Naive thymus-derived CD4-positive, alpha-beta T cell (primary cell): ENCODE measurements at regions of chr2 and their contacts with region 1.

Region 1: DNA sequence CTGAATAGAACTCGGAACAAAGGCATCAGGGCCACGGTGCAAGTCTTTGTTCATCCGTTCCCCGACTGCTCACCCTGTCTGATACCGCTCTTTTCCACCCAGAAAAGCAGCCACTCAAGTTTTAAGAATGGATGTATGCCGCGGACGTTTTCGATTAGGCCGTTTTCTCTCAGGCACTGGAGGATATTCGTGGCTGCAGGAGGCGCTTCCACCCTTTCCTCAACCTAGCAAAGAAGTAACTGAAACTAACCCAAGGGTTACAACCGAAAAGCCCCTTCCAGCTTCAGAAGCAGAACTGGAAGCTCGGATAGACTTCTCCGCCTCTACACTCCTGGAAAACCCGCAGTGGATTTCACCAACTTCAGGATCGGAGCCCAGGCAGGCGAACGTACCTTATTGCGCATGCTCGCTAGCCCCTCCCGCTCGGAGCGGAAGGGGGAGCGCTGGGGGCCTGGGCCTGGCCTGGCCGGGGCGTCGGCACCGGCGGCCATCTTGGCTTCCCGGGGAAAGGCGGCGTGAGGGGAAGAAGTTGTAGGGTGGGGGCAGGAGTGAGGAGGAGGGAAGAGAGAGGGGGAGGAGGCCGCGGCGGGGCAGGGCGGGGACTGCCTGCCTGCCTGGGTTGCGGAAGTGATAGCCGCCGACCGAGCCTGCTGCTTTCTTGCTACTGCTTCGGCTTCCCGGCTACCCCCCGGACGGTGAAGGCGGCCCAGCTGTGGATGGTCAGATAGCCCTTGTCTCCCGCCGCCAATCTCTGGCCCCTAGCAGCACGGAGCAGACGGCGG is at the start of gene ACTR3:
- DNase-seq: peak; percentile 93 to 99 (median 98)
- ATAC-seq: peak; percentile 94
- H3K4me3 ChIP-seq: peak within 1 kb of the TSS; percentile 89
- H3K4me3 Mint-ChIP-seq: peak within 1 kb of the TSS; percentile 88 to 100 (median 98)
- H3K27ac ChIP-seq: peak within 1 kb of the TSS; percentile 98
- H3K27ac Mint-ChIP-seq: peak within 1 kb of the TSS; percentile 90 to 99 (median 98)
- H3K4me1 ChIP-seq: peaks cover 45 to 68% of the 10 kb centered on the region in 2 donors
- H3K4me1 Mint-ChIP-seq: peaks cover 59 to 84% (median 81%) of the 10 kb centered on the region in 7 donors
- H3K27me3 ChIP-seq: no peaks in the 10 kb centered on the region
- H3K27me3 Mint-ChIP-seq: no peaks in the 10 kb centered on the region
- total RNA-seq, gene ACTR3: 172 to 612 (median 213) TPM

Region 2: GRCh38 chr2:112275306-112275886 is 1614.3 kb before region 1 on chr2 and contains the start of gene ZC3H6:
- CTCF ChIA-PET with region 1: no interaction called
- POLR2A ChIA-PET with region 1: interaction called, 3 read pairs
- intact Hi-C with region 1: loop called in 1 of 2 experiments (anchors 10 kb)
- DNase-seq: peak; percentile 96 to 100 (median 100)
- ATAC-seq: peak; percentile 98
- H3K4me3 ChIP-seq: peak within 1 kb of the TSS; percentile 99
- H3K4me3 Mint-ChIP-seq: peak within 1 kb of the TSS; percentile 85 to 95 (median 94)
- H3K27ac ChIP-seq: peak within 1 kb of the TSS; percentile 100
- H3K27ac Mint-ChIP-seq: peak within 1 kb of the TSS; percentile 90 to 99 (median 98)
- H3K4me1 ChIP-seq: peaks cover 14 to 18% of the 10 kb centered on the region in 2 donors
- H3K4me1 Mint-ChIP-seq: peaks cover 9 to 36% (median 25%) of the 10 kb centered on the region in 7 donors
- H3K27me3 ChIP-seq: no peaks in the 10 kb centered on the region
- H3K27me3 Mint-ChIP-seq: peaks cover 0 to 3% (median 0%) of the 10 kb centered on the region in 5 donors
- total RNA-seq, gene ZC3H6: 11.8 to 42.1 (median 23.7) TPM

Region 3: DNA sequence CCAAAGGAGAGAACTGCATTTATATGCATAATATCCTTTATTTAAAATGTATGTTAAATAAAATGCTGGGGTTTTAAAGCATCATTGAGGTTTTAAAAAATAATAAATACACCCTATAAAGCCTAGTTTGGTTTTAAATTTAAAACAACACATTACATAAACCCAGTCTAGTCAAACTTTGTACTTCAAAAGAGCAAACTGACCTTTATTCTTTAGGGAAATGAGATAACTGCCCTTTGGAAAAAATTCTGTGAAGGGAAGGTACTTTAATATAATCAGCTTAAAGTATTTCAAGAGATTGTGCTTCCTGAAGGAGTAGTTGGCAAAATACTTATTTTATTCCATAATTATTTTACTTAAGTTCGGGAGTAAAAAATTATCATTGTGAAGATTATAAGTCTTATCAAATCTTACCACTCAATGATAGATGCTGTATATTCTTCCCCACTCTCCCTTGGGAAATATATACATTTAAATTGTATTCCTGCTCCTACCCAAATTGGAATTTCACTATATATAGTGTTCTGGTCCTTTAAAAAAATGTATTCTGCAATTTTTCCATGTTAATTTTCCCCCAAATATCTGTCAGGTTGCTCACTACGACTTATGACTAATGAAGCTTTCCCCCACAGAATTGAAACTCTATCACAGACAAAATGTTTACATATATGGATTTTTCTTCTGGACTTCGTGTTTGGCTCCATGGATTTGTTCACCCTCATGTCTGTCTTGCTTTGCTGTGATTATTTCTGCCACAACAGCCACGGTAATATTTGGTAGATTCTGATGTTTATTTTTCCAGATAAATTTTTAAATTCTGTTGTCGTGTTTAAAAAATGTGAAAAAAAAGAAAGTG is 1572.1 kb before region 1 on chr2:
- CTCF ChIA-PET with region 1: no interaction called
- POLR2A ChIA-PET with region 1: no interaction called
- intact Hi-C with region 1: no loop called
- DNase-seq: no peak
- ATAC-seq: no peak
- H3K4me3 ChIP-seq: no peak overlapping the region
- H3K4me3 Mint-ChIP-seq: no peak overlapping the region
- H3K27ac ChIP-seq: no peak overlapping the region
- H3K27ac Mint-ChIP-seq: no peak overlapping the region
- H3K4me1 ChIP-seq: no peaks in the 10 kb centered on the region
- H3K4me1 Mint-ChIP-seq: no peaks in the 10 kb centered on the region
- H3K27me3 ChIP-seq: no peaks in the 10 kb centered on the region
- H3K27me3 Mint-ChIP-seq: no peaks in the 10 kb centered on the region

Region 4: DNA sequence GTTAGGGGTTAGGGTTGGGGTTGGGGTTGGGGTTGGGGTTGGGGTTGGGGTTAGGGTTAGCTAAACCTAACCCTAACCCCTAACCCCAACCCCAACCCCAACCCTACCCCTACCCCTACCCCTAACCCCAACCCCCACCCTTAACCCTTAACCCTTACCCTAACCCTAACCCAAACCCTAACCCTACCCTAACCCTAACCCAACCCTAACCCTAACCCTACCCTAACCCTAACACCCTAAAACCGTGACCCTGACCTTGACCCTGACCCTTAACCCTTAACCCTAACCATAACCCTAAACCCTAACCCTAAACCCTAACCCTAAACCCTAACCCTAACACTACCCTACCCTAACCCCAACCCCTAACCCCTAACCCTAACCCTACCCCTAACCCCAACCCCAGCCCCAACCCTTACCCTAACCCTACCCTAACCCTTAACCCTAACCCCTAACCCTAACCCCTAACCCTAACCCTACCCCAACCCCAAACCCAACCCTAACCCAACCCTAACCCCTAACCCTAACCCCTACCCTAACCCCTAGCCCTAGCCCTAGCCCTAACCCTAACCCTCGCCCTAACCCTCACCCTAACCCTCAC is 286.7 kb before region 1 on chr2:
- CTCF ChIA-PET with region 1: no interaction called
- POLR2A ChIA-PET with region 1: no interaction called
- intact Hi-C with region 1: loop called in 1 of 2 experiments (anchors 10 kb)
- DNase-seq: no peak
- ATAC-seq: no peak
- H3K4me3 ChIP-seq: peak overlapping the region; percentile 51
- H3K4me3 Mint-ChIP-seq: peak overlapping the region; percentile 78 to 94 (median 91)
- H3K27ac ChIP-seq: peak overlapping the region; percentile 79
- H3K27ac Mint-ChIP-seq: peak overlapping the region; percentile 88 to 98 (median 94)
- H3K4me1 ChIP-seq: no peaks in the 10 kb centered on the region
- H3K4me1 Mint-ChIP-seq: peaks cover 0 to 9% (median 5%) of the 10 kb centered on the region in 7 donors
- H3K27me3 ChIP-seq: no peaks in the 10 kb centered on the region
- H3K27me3 Mint-ChIP-seq: no peaks in the 10 kb centered on the region

Region 5: DNA sequence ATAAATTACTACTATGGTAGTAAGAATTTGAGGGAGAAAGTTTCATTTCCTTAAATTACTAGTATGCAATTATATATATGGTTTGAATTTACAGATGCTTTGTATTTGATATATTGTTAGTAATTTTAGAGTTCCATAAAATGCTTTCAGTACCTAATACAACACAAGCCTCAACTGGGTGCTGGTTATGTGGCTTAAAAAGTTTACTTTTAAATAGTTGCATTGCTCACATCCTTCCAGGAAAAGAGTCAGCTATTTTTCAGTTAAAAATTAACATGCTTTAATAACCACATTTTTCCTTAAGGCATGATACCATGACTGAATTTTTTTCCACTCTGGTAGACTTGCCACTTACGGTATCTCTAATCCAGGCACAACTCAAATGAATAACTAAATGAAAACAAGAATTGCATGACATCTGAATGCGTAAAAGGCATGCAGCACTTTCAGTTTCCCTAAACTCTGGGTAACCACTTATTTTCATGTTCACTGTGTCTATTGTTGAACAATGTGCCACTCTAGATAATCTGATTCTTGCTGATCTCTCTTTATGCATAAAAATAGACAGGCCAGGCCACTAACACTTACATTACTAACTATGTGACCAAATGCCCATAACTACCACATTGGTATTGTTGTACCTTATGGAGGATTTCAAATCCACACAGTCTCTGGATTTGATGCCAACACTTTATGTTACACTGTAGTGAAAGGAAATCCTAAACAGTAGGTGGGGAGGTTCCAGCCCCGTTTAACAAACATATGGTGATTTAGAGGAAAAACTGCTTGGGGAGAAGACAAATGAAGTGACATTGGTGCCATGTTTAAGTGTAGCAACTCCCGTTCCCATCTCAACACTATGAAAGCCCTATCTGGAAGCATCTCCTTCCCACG is 97.7 kb before region 1 on chr2:
- CTCF ChIA-PET with region 1: no interaction called
- POLR2A ChIA-PET with region 1: no interaction called
- intact Hi-C with region 1: loop called in 1 of 2 experiments (anchors 1 kb)
- DNase-seq: no peak
- ATAC-seq: no peak
- H3K4me3 ChIP-seq: no peak overlapping the region
- H3K4me3 Mint-ChIP-seq: peak overlapping the region in 1 of 10 donors; percentile 71
- H3K27ac ChIP-seq: no peak overlapping the region
- H3K27ac Mint-ChIP-seq: peak overlapping the region in 1 of 9 donors; percentile 73
- H3K4me1 ChIP-seq: no peaks in the 10 kb centered on the region
- H3K4me1 Mint-ChIP-seq: peaks cover 0 to 24% (median 0%) of the 10 kb centered on the region in 7 donors
- H3K27me3 ChIP-seq: no peaks in the 10 kb centered on the region
- H3K27me3 Mint-ChIP-seq: peaks cover 0 to 3% (median 0%) of the 10 kb centered on the region in 5 donors

Region 6: GRCh38 chr2:113910110-113910717 is 20.6 kb after region 1 on chr2:
- CTCF ChIA-PET with region 1: interaction called, 3 read pairs
- POLR2A ChIA-PET with region 1: interaction called, 4 read pairs
- intact Hi-C with region 1: loop called in 1 of 2 experiments (anchors 2 kb)
- DNase-seq: peak in 1 of 9 donors; percentile 78
- ATAC-seq: peak; percentile 46
- H3K4me3 ChIP-seq: no peak overlapping the region
- H3K4me3 Mint-ChIP-seq: peak overlapping the region; percentile 3 to 91 (median 65)
- H3K27ac ChIP-seq: peak overlapping the region; percentile 36
- H3K27ac Mint-ChIP-seq: peak overlapping the region in 8 of 9 donors; percentile 12 to 90 (median 80)
- H3K4me1 ChIP-seq: peaks cover 35 to 39% of the 10 kb centered on the region in 2 donors
- H3K4me1 Mint-ChIP-seq: peaks cover 40 to 95% (median 82%) of the 10 kb centered on the region in 7 donors
- H3K27me3 ChIP-seq: no peaks in the 10 kb centered on the region
- H3K27me3 Mint-ChIP-seq: no peaks in the 10 kb centered on the region

Region 7: DNA sequence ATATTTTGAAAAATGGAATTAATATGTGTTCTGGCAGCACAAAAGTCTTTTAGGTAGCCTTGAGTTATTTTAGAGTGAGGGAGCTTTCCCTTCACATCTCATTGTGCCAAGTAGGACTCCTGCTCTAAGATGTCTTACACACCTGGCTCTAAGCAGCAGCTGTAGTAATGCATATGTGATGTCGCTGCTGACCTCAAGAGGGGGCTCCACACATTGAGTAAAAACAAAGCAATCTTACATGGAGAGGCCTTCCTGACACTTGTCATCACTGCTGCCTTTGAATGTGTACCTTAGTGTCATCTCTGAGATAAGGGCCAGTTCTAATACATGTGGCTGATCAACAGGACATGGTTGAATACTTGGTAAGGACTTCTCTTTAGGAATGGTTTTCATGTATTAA is 76.0 kb after region 1 on chr2:
- CTCF ChIA-PET with region 1: interaction called, 3 read pairs
- POLR2A ChIA-PET with region 1: no interaction called
- intact Hi-C with region 1: loop called in 1 of 2 experiments (anchors 5 kb)
- DNase-seq: peak in 6 of 9 donors; percentile 27 to 41 (median 34)
- ATAC-seq: peak; percentile 84
- H3K4me3 ChIP-seq: no peak overlapping the region
- H3K4me3 Mint-ChIP-seq: no peak overlapping the region
- H3K27ac ChIP-seq: no peak overlapping the region
- H3K27ac Mint-ChIP-seq: peak overlapping the region in 7 of 9 donors; percentile 8 to 77 (median 20)
- H3K4me1 ChIP-seq: no peaks in the 10 kb centered on the region
- H3K4me1 Mint-ChIP-seq: peaks cover 0 to 29% (median 11%) of the 10 kb centered on the region in 7 donors
- H3K27me3 ChIP-seq: no peaks in the 10 kb centered on the region
- H3K27me3 Mint-ChIP-seq: no peaks in the 10 kb centered on the region

Region 8: DNA sequence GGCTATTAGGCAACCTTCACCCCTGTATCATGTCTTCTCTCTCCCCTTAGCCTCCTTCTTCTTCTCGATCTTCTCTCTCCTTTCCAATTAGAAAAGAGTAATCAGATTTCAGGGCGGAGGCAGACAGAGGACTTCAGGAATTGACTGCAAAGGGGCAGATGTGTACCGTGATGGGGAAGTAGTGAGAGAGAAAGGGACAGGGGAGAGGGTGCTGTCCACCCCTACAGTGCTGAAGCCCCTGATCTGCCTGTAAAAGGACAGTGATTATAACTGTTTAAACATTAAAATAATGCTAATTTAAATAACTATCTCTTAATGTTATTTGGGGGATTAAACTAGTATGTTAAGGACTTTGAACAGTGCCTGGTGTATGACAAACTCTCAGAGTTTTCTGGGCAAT is 178.8 kb after region 1 on chr2:
- CTCF ChIA-PET with region 1: no interaction called
- POLR2A ChIA-PET with region 1: no interaction called
- intact Hi-C with region 1: no loop called
- DNase-seq: no peak
- ATAC-seq: no peak
- H3K4me3 ChIP-seq: no peak overlapping the region
- H3K4me3 Mint-ChIP-seq: no peak overlapping the region
- H3K27ac ChIP-seq: no peak overlapping the region
- H3K27ac Mint-ChIP-seq: no peak overlapping the region
- H3K4me1 ChIP-seq: no peaks in the 10 kb centered on the region
- H3K4me1 Mint-ChIP-seq: peaks cover 0 to 1% (median 0%) of the 10 kb centered on the region in 7 donors
- H3K27me3 ChIP-seq: no peaks in the 10 kb centered on the region
- H3K27me3 Mint-ChIP-seq: peaks cover 2 to 47% (median 31%) of the 10 kb centered on the region in 5 donors